Naive thymus-derived CD4-positive, alpha-beta T cell (primary cell): ENCODE measurements at regions of chr1 and their contacts with region 1.

Region 1: DNA sequence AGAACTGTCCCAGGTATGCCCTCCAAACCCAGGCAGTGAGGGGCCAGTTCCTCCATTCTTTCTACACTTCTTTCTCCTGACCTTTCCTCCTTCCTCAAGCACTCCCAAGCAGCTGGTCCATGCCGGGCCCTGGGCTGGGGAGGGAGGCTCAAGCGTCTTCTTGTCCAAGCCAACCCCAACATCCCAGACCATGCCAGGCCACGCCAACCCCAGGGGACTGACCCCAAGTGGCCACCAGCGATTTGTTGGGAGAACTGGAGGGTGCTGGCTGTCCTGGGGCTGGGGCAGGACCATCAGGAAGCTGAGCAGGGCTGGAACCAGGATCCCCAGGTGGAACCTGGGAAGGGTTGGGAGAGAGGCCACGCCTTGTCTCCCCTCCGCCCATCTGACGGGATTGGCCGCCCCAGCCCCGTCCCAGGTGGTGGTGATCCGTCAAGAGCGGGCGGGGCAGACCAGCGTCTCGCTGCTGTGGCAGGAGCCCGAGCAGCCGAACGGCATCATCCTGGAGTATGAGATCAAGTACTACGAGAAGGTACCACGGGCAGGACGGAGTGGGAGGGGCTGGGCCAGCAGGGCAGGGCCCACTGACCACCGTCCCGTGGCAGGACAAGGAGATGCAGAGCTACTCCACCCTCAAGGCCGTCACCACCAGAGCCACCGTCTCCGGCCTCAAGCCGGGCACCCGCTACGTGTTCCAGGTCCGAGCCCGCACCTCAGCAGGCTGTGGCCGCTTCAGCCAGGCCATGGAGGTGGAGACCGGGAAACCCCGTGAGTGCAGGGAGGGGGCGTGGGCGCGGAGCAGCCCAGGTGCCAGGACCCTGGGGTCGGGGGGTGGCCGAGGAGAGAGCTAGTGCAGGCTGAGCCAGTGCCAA is 29.9 kb downstream of the EPHA8 start:
- DNase-seq: no peak
- ATAC-seq: no peak
- H3K4me3 ChIP-seq: no peak overlapping the region
- H3K4me3 Mint-ChIP-seq: no peak overlapping the region
- H3K27ac ChIP-seq: no peak overlapping the region
- H3K27ac Mint-ChIP-seq: no peak overlapping the region
- H3K4me1 ChIP-seq: no peaks in the 10 kb centered on the region
- H3K4me1 Mint-ChIP-seq: no peaks in the 10 kb centered on the region
- H3K27me3 ChIP-seq: no peaks in the 10 kb centered on the region
- H3K27me3 Mint-ChIP-seq: peaks cover 0 to 41% (median 26%) of the 10 kb centered on the region in 5 donors

Region 2: GRCh38 chr1:22376976-22377375 is 216.2 kb before region 1 on chr1:
- CTCF ChIA-PET with region 1: no interaction called
- POLR2A ChIA-PET with region 1: no interaction called
- intact Hi-C with region 1: no loop called
- DNase-seq: no peak
- ATAC-seq: no peak
- H3K4me3 ChIP-seq: no peak overlapping the region
- H3K4me3 Mint-ChIP-seq: no peak overlapping the region
- H3K27ac ChIP-seq: no peak overlapping the region
- H3K27ac Mint-ChIP-seq: no peak overlapping the region
- H3K4me1 ChIP-seq: no peaks in the 10 kb centered on the region
- H3K4me1 Mint-ChIP-seq: peaks cover 0 to 1% (median 0%) of the 10 kb centered on the region in 7 donors
- H3K27me3 ChIP-seq: peaks cover 0 to 4% of the 10 kb centered on the region in 2 donors
- H3K27me3 Mint-ChIP-seq: peaks cover 3 to 12% (median 8%) of the 10 kb centered on the region in 5 donors

Region 3: GRCh38 chr1:22876359-22877111 is 283.4 kb after region 1 on chr1:
- CTCF ChIA-PET with region 1: no interaction called
- POLR2A ChIA-PET with region 1: no interaction called
- intact Hi-C with region 1: no loop called
- DNase-seq: no peak
- ATAC-seq: no peak
- H3K4me3 ChIP-seq: no peak overlapping the region
- H3K4me3 Mint-ChIP-seq: no peak overlapping the region
- H3K27ac ChIP-seq: no peak overlapping the region
- H3K27ac Mint-ChIP-seq: no peak overlapping the region
- H3K4me1 ChIP-seq: no peaks in the 10 kb centered on the region
- H3K4me1 Mint-ChIP-seq: no peaks in the 10 kb centered on the region
- H3K27me3 ChIP-seq: no peaks in the 10 kb centered on the region
- H3K27me3 Mint-ChIP-seq: peaks cover 0 to 6% (median 0%) of the 10 kb centered on the region in 5 donors

Region 4: GRCh38 chr1:22916471-22916820 is 323.3 kb after region 1 on chr1:
- CTCF ChIA-PET with region 1: no interaction called
- POLR2A ChIA-PET with region 1: no interaction called
- intact Hi-C with region 1: loop called in 1 of 2 experiments (anchors 10 kb)
- DNase-seq: no peak
- ATAC-seq: no peak
- H3K4me3 ChIP-seq: no peak overlapping the region
- H3K4me3 Mint-ChIP-seq: no peak overlapping the region
- H3K27ac ChIP-seq: no peak overlapping the region
- H3K27ac Mint-ChIP-seq: no peak overlapping the region
- H3K4me1 ChIP-seq: no peaks in the 10 kb centered on the region
- H3K4me1 Mint-ChIP-seq: no peaks in the 10 kb centered on the region
- H3K27me3 ChIP-seq: no peaks in the 10 kb centered on the region
- H3K27me3 Mint-ChIP-seq: peaks cover 0 to 16% (median 6%) of the 10 kb centered on the region in 5 donors

Region 5: GRCh38 chr1:23177438-23178380 is 584.6 kb after region 1 on chr1:
- CTCF ChIA-PET with region 1: no interaction called
- POLR2A ChIA-PET with region 1: no interaction called
- intact Hi-C with region 1: no loop called
- DNase-seq: peak in 8 of 9 donors; percentile 12 to 68 (median 20)
- ATAC-seq: peak; percentile 84
- H3K4me3 ChIP-seq: peak overlapping the region; percentile 35
- H3K4me3 Mint-ChIP-seq: peak overlapping the region; percentile 65 to 82 (median 72)
- H3K27ac ChIP-seq: no peak overlapping the region
- H3K27ac Mint-ChIP-seq: no peak overlapping the region
- H3K4me1 ChIP-seq: no peaks in the 10 kb centered on the region
- H3K4me1 Mint-ChIP-seq: peaks cover 0 to 20% (median 15%) of the 10 kb centered on the region in 7 donors
- H3K27me3 ChIP-seq: no peaks in the 10 kb centered on the region
- H3K27me3 Mint-ChIP-seq: peaks cover 0 to 38% (median 5%) of the 10 kb centered on the region in 5 donors